ENCODE measurements at regions of chr6 and their contacts with region 1.

Region 1: DNA sequence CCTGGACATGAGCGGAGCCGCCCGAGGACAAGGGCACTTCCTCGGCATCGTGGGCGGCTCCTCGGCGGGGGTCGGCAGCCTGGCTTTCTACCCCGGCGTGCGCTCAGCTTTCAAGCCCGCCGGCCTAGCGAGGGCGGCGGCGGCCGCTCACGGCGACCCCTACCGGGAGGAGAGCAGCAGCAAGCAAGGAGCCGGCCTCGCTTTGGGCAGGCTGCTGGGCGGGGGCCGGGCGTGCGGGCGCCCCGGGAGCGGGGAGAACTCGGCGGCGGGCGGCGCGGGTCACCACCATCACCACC is 6.7 kb downstream of the PRDM13 start:
- DNase-seq: no peak
- ATAC-seq: peak; percentile 77

Region 2: GRCh38 chr6:99467509-99468106 is 145.7 kb before region 1 on chr6:
- intact Hi-C with region 1: loop called (anchors 5 kb)
- DNase-seq: no peak
- ATAC-seq: no peak